Activated naive CD8-positive, alpha-beta T cell treated with anti-CD3 and anti-CD28 coated beads, Interleukin-2, amount 10 ng/mL, durations not matched to agents 7 days and 5 days (primary cell): ENCODE measurements at regions of chr6 and their contacts with region 1.

Region 1: DNA sequence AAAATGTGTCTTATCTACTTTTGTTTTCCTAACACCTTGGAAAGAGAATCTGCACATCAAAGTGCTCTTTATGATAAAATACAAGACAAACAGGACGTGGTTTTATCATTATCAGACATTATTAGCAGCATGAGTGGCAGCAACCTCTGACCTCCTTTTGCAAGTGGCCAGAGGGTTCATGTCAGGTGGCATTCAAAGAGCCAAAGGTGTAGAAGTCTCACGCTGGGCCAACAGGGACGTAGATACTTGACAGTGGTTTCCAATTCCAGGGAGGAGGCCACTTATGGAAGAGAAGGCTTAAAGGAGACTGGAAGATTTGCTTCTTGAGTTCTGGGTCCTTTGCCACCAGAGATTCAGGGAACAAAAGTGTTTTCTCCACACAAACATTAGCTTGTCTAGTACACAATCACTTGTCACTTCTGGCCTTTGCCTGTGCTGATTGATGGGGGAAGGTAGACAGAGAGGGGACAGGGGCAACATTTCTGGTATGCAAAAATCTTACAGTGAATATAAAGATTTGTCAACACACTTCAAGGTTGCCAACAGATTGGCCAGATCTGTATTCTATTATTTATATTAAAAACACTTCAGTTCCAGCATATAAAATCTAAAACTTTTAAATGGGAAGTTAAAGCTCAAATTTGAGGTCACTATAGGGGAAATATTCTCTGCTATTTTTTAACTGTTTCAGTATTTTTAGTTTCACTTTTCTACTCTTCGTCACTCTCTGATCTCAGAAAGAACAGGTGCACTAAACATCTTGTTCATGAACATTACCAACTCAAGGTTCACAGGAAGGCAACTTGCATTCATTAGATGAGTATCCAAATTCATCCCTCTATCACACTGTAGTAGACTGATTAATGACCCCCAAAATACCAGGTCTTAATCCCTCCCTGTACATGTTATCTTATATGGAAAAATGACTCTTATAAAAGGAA is 52.1 kb upstream of the FBXO30 start:
- DNase-seq: no peak
- ATAC-seq: peak; percentile 30
- H3K4me3 Mint-ChIP-seq: peak overlapping the region; percentile 61
- H3K27ac Mint-ChIP-seq: peak overlapping the region; percentile 81
- H3K4me1 Mint-ChIP-seq: peaks cover 26% of the 10 kb centered on the region
- H3K27me3 Mint-ChIP-seq: no peaks in the 10 kb centered on the region

Region 2: DNA sequence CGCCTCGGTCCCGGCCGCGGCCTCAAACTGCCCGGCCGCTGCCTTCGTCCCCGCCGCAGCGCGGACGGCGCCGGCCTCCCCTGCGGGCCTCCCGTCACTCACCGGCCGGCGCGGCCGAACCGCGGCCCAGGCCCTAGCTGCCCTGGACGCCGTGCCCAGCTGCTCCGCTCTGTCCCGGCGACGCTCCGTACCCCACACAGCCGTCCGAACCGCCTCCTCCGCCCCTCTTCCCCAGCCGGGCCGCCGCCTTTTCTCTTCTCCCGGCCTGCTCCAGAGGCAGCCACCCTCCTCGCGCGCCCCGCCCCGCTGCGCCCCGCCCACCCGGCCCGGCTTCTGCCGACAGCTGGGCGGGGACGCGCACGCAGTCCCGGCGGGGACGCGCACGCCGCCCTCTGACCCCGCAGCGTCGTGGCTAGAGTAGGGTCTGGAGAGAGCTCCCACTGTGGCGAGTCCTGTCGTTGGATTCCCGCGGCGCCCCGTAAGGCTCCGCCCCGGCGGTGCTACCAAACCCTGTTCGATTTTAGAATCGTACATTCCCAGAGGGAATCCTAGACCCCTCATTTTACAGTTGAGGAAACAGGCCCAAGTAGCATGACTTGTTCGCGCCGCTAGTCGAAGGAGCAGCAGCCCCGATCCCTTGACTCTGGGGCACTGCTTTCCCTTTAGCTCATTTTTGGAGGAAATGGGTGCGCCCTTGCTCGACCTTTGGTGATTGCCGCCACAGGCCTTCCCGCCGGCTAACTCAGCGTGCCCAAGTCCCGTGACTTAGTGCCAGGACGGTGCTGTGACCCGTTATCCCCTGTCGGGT is 52.0 kb before region 1 on chr6 and contains the start of gene FBXO30:
- POLR2A ChIA-PET with region 1: interaction called, 13 read pairs
- DNase-seq: peak; percentile 94
- ATAC-seq: peak; percentile 83
- H3K4me3 Mint-ChIP-seq: peak within 1 kb of the TSS; percentile 93
- H3K27ac Mint-ChIP-seq: peak within 1 kb of the TSS; percentile 93
- H3K4me1 Mint-ChIP-seq: peaks cover 25% of the 10 kb centered on the region
- H3K27me3 Mint-ChIP-seq: no peaks in the 10 kb centered on the region
- total RNA-seq, gene FBXO30: 6.6 to 7.2 TPM